HepG2 (cell line): ENCODE measurements at regions of chr6 and their contacts with region 1.

Region 1: DNA sequence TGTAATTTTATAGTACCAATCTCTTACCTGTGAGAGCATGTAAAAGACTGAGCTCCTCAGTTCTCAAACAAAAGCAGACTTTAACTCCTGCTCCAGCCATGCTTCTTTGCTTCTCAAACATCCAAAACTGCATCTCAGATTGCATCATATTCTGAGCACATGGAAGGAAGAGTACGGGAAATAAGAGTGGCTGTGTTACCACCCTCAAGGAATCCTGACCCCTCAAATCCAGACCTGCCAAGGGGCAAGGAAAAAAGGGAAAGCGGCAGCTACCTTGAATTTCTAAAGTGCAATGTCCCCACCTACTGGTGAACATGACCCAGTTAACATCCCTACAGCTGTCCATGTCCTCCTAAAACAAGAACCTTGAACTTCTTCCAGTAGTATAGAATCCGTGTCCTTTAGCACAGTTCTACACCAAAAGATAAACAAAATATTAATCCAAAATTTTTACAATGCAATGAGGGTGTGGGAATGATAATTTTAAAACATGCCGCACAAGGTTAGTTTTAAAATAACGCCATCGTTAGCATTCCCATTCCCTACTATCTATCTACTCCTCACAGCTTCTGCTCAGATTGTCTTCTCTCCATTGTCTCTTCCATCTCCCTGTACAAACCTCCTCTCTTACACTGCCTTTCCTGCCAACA is 34.1 kb upstream of the HLA-DQB1 start:
- DNase-seq: peak; percentile 56
- ATAC-seq: peak; percentile 88
- H3K4me3 ChIP-seq: no peak overlapping the region
- H3K27ac ChIP-seq: no peak overlapping the region
- H3K4me1 ChIP-seq: no peaks in the 10 kb centered on the region
- H3K27me3 ChIP-seq: no peaks in the 10 kb centered on the region; a peak in 1 of 5 replicates
- CTCF ChIP-seq: peak; percentile 77
- EP300 ChIP-seq: no peak
- POLR2A ChIP-seq: no peak
- RAD21 ChIP-seq: peak; percentile 36; the same call in 1 of the 2 replicates

Region 2: GRCh38 chr6:32369675-32370074 is 330.8 kb before region 1 on chr6:
- CTCF ChIA-PET with region 1: no interaction called
- POLR2A ChIA-PET with region 1: no interaction called
- in situ Hi-C with region 1: no loop called
- intact Hi-C with region 1: no loop called
- DNase-seq: no peak
- ATAC-seq: no peak
- H3K4me3 ChIP-seq: no peak overlapping the region
- H3K27ac ChIP-seq: no peak overlapping the region
- H3K4me1 ChIP-seq: peaks cover 11% of the 10 kb centered on the region
- H3K27me3 ChIP-seq: peaks cover 0 to 9% of the 10 kb centered on the region in 2 experiments; a peak in 2 of 5 replicates
- CTCF ChIP-seq: no peak
- EP300 ChIP-seq: no peak
- POLR2A ChIP-seq: no peak
- RAD21 ChIP-seq: no peak

Region 3: GRCh38 chr6:32643904-32644303 is 56.6 kb before region 1 on chr6:
- CTCF ChIA-PET with region 1: no interaction called
- POLR2A ChIA-PET with region 1: no interaction called
- in situ Hi-C with region 1: no loop called
- intact Hi-C with region 1: no loop called
- DNase-seq: no peak
- ATAC-seq: no peak
- H3K4me3 ChIP-seq: no peak overlapping the region
- H3K27ac ChIP-seq: no peak overlapping the region
- H3K4me1 ChIP-seq: no peaks in the 10 kb centered on the region
- H3K27me3 ChIP-seq: peaks cover 0 to 9% of the 10 kb centered on the region in 2 experiments; a peak in 2 of 5 replicates
- CTCF ChIP-seq: no peak
- EP300 ChIP-seq: no peak
- POLR2A ChIP-seq: no peak
- RAD21 ChIP-seq: no peak

Region 4: GRCh38 chr6:32785781-32786533 is 85.4 kb after region 1 on chr6:
- CTCF ChIA-PET with region 1: interaction called, 3 read pairs
- POLR2A ChIA-PET with region 1: no interaction called
- in situ Hi-C with region 1: no loop called
- intact Hi-C with region 1: loop called (anchors 5 kb)
- DNase-seq: peak; percentile 44
- ATAC-seq: peak; percentile 86
- H3K4me3 ChIP-seq: no peak overlapping the region
- H3K27ac ChIP-seq: no peak overlapping the region
- H3K4me1 ChIP-seq: peaks cover 7% of the 10 kb centered on the region; the same call in 1 of the 2 replicates
- H3K27me3 ChIP-seq: no peaks in the 10 kb centered on the region; a peak in 1 of 5 replicates
- CTCF ChIP-seq: peak; percentile 80
- EP300 ChIP-seq: no peak
- POLR2A ChIP-seq: no peak
- RAD21 ChIP-seq: peak; percentile 39; the same call in 1 of the 2 replicates